Sigmoid colon (tissue), 7 donors: ENCODE measurements at regions of chr1 and their contacts with region 1.

Region 1: DNA sequence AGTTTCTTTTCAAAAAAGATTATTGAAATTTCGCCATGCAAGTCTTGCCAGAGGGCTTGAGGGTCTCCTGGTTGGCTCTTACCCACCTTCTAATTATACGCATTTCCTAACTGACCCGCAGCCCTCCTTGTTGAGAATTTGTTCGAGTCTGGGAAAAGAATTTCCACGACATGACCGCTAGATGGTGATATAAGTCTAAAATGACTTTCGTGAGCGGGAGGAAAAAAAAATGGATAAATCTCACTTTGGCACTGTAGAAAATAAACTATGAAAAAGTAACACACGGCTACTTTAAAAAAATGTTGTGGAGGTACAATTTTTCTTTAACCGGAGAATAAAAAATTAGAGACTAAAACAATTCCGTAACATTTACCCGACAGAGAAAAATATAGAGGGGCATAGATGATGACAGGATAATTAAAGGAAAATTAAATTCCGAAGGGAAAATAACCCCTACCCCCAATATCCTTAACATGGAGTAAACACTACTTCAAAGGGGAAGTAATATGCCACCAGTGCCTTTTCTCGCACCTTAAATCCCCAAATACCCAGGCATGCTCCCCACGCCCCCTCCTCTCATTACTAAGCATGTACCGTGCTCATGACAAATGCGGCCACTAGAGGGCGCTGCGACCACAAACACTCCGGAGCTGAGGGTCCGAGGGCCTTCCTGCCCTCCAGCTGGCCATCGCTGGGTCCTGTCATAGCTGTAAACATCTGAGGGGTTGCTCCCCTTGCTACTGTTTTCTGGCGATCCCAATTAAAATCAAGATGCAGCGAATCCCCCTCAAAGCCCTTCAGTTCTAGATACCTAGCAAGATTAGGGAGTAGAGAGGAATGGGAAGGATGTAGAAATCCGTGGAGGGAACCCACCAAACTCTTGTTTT is 266.9 kb downstream of the ASTN1 start:
- DNase-seq: no peak
- H3K4me3 ChIP-seq: peak overlapping the region in 1 of 4 donors; percentile 26
- H3K27ac ChIP-seq: no peak overlapping the region
- H3K4me1 ChIP-seq: peaks cover 0 to 7% (median 5%) of the 10 kb centered on the region in 4 donors
- H3K27me3 ChIP-seq: peaks cover 0 to 11% (median 0%) of the 10 kb centered on the region in 3 donors
- CTCF ChIP-seq: peak; percentile 17 to 67 (median 56)
- EP300 ChIP-seq: no peak
- POLR2A ChIP-seq: no peak

Region 2: DNA sequence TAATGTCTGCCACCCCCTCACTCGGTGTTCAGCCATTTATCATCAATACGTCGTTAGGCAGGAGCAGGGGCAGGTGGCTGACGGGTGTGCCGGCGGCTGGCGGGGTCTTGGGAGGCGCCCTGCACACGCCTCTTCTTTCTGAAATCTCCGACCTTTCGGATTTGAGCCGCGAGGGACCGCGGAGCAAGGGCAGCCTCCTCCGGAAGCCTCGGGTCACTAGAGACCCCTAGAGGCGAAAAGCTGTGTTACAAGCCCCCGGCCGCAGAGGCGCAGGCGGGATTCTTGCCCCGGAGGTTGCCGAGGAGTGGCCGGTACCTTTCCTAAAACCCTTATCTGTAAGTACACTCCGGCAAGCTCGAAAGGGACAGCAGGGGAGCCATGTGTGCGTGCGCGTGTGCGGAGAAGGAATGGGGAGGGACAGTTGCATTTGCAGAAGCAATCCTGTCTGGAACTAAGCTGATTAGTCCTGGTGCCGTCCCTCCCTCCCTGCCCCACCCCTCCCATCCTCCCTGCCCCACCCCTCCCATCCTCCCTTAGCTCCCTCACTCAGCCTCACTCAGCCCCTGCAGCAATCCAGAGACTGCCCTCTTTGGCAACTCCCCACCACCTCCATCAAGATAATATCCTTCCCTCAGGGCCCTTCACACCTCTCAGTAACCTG is 284.2 kb after region 1 on chr1:
- intact Hi-C with region 1: loop called (anchors 5 kb)
- DNase-seq: peak; percentile 65
- H3K4me3 ChIP-seq: peak overlapping the region in 2 of 4 donors; percentile 11 to 16
- H3K27ac ChIP-seq: no peak overlapping the region
- H3K4me1 ChIP-seq: peaks cover 0 to 7% (median 4%) of the 10 kb centered on the region in 4 donors
- H3K27me3 ChIP-seq: peaks cover 0 to 32% (median 0%) of the 10 kb centered on the region in 3 donors
- CTCF ChIP-seq: peak; percentile 21 to 79 (median 47)
- EP300 ChIP-seq: no peak
- POLR2A ChIP-seq: no peak

Region 3: DNA sequence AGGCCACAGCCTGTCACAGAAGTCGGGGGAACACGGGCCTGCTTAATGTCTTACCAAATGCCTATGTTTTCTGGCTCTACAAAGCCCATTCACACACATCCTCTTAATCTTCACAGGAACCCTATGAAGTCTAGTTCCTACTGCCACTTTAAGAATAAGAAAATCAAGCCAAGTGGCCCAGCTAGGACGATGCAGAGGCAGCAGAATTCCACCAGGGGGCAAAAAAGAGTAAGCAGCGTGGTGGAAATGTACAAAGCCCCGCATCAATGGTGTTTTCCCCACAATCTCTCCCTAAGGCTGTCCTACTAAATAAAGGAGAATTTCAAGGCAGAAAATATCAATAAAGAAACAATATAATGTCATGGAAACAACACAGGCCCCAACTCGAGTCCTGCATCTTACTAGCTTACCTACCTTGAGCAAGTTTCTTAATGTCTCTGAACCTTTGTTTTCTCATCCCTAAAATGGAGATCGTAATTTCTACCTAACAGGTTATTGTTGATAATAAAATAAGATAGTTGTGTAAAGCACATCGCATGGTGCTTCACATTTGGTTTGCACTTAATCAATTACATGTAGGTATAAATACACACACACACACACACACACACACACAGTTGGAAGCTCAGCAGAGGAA is 1050.9 kb after region 1 on chr1:
- intact Hi-C with region 1: loop called (anchors 2 kb)
- DNase-seq: peak; percentile 75
- H3K4me3 ChIP-seq: no peak overlapping the region
- H3K27ac ChIP-seq: no peak overlapping the region
- H3K4me1 ChIP-seq: peaks cover 0 to 9% (median 0%) of the 10 kb centered on the region in 4 donors
- H3K27me3 ChIP-seq: no peaks in the 10 kb centered on the region
- CTCF ChIP-seq: peak; percentile 28 to 81 (median 78)
- EP300 ChIP-seq: no peak
- POLR2A ChIP-seq: no peak